GM23248 (cell line): ENCODE measurements at regions of chr6 and their contacts with region 1.

Region 1: GRCh38 chr6:27132532-27133280 is 114.8 kb upstream of the PRSS16 start:
- DNase-seq: peak; percentile 99
- H3K4me3 ChIP-seq: peak overlapping the region; percentile 75
- H3K27ac ChIP-seq: peak overlapping the region; percentile 89
- H3K4me1 ChIP-seq: peaks cover 11% of the 10 kb centered on the region; the same call in 1 of the 2 replicates
- H3K27me3 ChIP-seq: no peaks in the 10 kb centered on the region

Region 2: GRCh38 chr6:26025894-26026832 is 1106.5 kb before region 1 on chr6:
- in situ Hi-C with region 1: loop called (anchors 25 kb)
- DNase-seq: peak; percentile 97
- H3K4me3 ChIP-seq: peak overlapping the region; percentile 81
- H3K27ac ChIP-seq: peak overlapping the region; percentile 85
- H3K4me1 ChIP-seq: peaks cover 22% of the 10 kb centered on the region
- H3K27me3 ChIP-seq: no peaks in the 10 kb centered on the region

Region 3: DNA sequence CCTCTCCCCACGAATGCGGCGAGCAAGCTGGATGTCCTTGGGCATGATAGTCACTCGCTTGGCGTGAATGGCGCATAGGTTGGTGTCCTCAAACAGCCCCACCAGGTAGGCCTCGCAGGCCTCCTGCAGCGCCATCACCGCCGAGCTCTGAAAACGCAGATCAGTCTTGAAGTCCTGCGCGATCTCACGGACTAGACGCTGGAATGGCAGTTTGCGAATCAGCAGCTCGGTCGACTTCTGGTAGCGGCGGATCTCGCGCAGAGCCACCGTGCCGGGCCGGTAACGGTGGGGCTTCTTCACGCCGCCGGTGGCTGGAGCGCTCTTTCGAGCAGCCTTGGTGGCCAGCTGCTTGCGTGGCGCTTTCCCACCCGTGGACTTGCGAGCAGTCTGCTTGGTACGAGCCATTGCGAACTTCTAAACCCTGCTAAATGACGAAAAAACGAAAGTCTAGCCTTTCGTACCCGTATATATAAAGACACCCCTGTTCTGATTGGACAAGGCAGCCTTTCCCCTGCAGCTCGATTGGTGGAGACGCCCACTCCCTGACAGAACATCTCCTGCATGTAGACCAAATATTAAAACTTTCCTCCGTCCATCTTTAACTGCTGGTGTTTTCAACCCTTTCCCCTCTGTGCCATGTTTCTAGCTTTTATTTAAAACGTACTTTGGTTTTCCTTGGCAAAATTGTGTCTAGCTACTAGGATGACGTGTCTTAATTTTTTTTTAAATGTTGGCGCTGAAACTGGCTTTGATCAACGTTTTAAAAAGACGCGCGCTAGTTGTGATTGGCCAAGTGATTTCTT is 935.7 kb before region 1 on chr6:
- in situ Hi-C with region 1: loop called (anchors 25 kb)
- DNase-seq: peak; percentile 89
- H3K4me3 ChIP-seq: peak overlapping the region; percentile 75
- H3K27ac ChIP-seq: peak overlapping the region; percentile 68
- H3K4me1 ChIP-seq: peaks cover 12% of the 10 kb centered on the region
- H3K27me3 ChIP-seq: no peaks in the 10 kb centered on the region

Region 4: GRCh38 chr6:26312501-26313390 is 820.0 kb before region 1 on chr6:
- in situ Hi-C with region 1: loop called (anchors 25 kb)
- DNase-seq: peak; percentile 84
- H3K4me3 ChIP-seq: peak overlapping the region; percentile 95
- H3K27ac ChIP-seq: peak overlapping the region; percentile 66
- H3K4me1 ChIP-seq: peaks cover 23% of the 10 kb centered on the region
- H3K27me3 ChIP-seq: no peaks in the 10 kb centered on the region